Head of caudate nucleus (tissue), 42 donors: ENCODE measurements at regions of chr17 and their contacts with region 1.

Region 1: GRCh38 chr17:66906321-66907278 is 57.9 kb upstream of the CACNG4 start:
- DNase-seq: peak; percentile 70 to 94 (median 85)

Region 2: GRCh38 chr17:66715745-66716156 is 190.8 kb before region 1 on chr17:
- intact Hi-C with region 1: loop called (anchors 5 kb)
- DNase-seq: peak in 9 of 42 donors; percentile 25 to 71 (median 42)